Thyroid gland (tissue), 4 donors: ENCODE measurements at regions of chr11 and their contacts with region 1.

Region 1: GRCh38 chr11:119481021-119481666 is 58.2 kb upstream of the THY1 start:
- DNase-seq: peak; percentile 74 to 77
- H3K4me3 ChIP-seq: no peak overlapping the region
- H3K27ac ChIP-seq: no peak overlapping the region
- H3K4me1 ChIP-seq: peaks cover 0 to 10% of the 10 kb centered on the region in 2 donors
- H3K27me3 ChIP-seq: no peaks in the 10 kb centered on the region
- CTCF ChIP-seq: peak; percentile 79 to 97 (median 94)
- POLR2A ChIP-seq: no peak

Region 2: DNA sequence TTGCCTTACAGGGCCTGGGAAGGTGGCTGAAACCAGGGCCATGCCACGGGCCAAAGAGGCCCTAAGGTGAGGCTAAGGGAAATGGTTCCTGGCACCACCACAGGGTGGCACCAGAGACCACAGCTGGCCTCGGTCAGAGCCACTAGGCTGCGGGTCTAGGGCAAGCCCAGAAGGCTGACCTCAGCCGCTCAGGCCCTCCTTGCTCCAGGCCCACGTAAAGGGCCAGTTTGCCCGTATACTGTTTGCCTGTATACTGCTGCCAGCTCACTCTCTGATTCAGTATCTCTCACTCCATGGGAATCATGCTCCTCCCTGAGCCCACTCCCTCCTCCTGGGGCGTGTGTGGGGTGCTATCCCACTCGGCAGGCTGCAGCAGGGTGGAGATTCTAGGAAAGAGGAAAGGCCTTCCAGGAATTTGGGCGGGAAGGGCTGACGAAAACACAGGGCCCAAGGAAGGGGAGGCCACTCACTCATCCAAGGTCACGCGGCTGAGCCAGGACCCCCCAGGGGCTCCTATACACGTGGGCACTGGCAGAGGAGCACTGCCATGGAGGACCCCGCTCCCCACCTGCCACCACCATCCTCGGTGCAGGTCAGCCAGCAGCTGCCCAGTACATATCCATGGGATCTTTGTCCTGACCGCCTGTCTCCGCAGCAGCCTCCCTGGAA is 185.5 kb after region 1 on chr11:
- intact Hi-C with region 1: no loop called
- DNase-seq: peak; percentile 66 to 71
- H3K4me3 ChIP-seq: no peak overlapping the region
- H3K27ac ChIP-seq: no peak overlapping the region
- H3K4me1 ChIP-seq: peaks cover 0 to 3% of the 10 kb centered on the region in 2 donors
- H3K27me3 ChIP-seq: no peaks in the 10 kb centered on the region
- CTCF ChIP-seq: peak; percentile 55 to 91 (median 82)
- POLR2A ChIP-seq: no peak

Region 3: GRCh38 chr11:119728651-119729580 is 247.8 kb after region 1 on chr11 and contains the start of gene NECTIN1:
- intact Hi-C with region 1: loop called (anchors 5 kb)
- DNase-seq: peak; percentile 84 to 87
- H3K4me3 ChIP-seq: peak within 1 kb of the TSS; percentile 66 to 87 (median 70)
- H3K27ac ChIP-seq: peak within 1 kb of the TSS in 2 of 3 donors; percentile 69 to 89
- H3K4me1 ChIP-seq: peaks cover 19 to 27% of the 10 kb centered on the region in 2 donors
- H3K27me3 ChIP-seq: no peaks in the 10 kb centered on the region
- CTCF ChIP-seq: peak; percentile 51 to 98 (median 85)
- POLR2A ChIP-seq: peak; percentile 8 to 97
- total RNA-seq, gene NECTIN1: 0.94 to 5.3 (median 2.3) TPM

Region 4: GRCh38 chr11:119741369-119742262 is 260.5 kb after region 1 on chr11:
- intact Hi-C with region 1: loop called (anchors 5 kb)
- DNase-seq: peak; percentile 34 to 35
- H3K4me3 ChIP-seq: no peak overlapping the region
- H3K27ac ChIP-seq: no peak overlapping the region
- H3K4me1 ChIP-seq: peaks cover 7 to 9% of the 10 kb centered on the region in 2 donors
- H3K27me3 ChIP-seq: no peaks in the 10 kb centered on the region
- CTCF ChIP-seq: peak; percentile 33 to 86 (median 60)
- POLR2A ChIP-seq: no peak

Region 5: DNA sequence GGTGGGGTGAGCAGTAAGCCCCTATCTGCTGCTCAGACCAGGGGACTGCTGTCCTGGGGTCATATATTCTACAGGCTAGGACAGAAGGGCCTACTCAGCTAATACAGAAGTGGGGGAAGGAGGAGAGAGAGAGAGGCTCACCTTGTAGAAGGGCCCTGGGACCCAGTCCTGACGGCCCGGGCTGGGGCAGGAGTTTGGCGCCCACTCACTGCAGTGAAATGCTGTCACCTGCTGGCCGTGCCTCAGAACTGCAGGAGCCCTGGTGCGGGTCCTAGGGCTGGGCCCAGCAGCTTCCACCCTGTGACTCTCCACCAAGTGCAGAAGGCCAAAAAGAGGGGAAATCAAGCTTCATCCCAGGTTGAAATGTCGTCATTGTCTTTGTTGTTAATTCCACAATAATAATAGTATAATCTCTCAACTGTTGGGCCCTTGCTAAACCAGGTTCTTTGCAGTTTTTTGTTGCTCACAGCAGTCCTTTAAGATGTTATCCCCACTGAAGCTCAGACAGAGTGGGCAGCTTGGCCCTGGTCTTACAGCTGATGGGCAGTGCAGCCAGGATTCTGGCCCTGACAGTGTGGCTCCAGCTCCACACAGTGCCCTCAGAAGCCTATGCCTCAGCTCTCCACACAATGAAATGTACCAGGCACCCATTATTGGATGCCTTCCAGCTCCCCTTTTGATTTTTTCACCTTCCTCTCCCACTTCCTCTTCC is 627.2 kb after region 1 on chr11:
- intact Hi-C with region 1: loop called (anchors 10 kb)
- DNase-seq: peak; percentile 60 to 63
- H3K4me3 ChIP-seq: no peak overlapping the region
- H3K27ac ChIP-seq: no peak overlapping the region
- H3K4me1 ChIP-seq: no peaks in the 10 kb centered on the region
- H3K27me3 ChIP-seq: no peaks in the 10 kb centered on the region
- CTCF ChIP-seq: peak; percentile 95 to 99 (median 96)
- POLR2A ChIP-seq: no peak